Transverse colon (tissue), 4 donors: ENCODE measurements at regions of chrX and their contacts with region 1.

Region 1: GRCh38 chrX:121308276-121308805 is 260.9 kb downstream of the GLUD2 start:
- DNase-seq: peak; percentile 8
- H3K4me3 ChIP-seq: no peak overlapping the region
- H3K27ac ChIP-seq: no peak overlapping the region
- H3K4me1 ChIP-seq: no peaks in the 10 kb centered on the region
- H3K27me3 ChIP-seq: no peaks in the 10 kb centered on the region
- CTCF ChIP-seq: peak in 3 of 5 experiments; percentile 14 to 29 (median 22)
- EP300 ChIP-seq: no peak
- POLR2A ChIP-seq: no peak

Region 2: GRCh38 chrX:121579016-121579760 is 270.8 kb after region 1 on chrX:
- in situ Hi-C with region 1: loop called in 3 of 4 experiments (anchors 25 kb)
- intact Hi-C with region 1: no loop called
- DNase-seq: peak; percentile 10
- H3K4me3 ChIP-seq: no peak overlapping the region
- H3K27ac ChIP-seq: no peak overlapping the region
- H3K4me1 ChIP-seq: no peaks in the 10 kb centered on the region
- H3K27me3 ChIP-seq: no peaks in the 10 kb centered on the region
- CTCF ChIP-seq: peak; percentile 18 to 32 (median 22)
- EP300 ChIP-seq: no peak
- POLR2A ChIP-seq: no peak